ENCODE measurements at regions of chr6 and their contacts with region 1.

Region 1: GRCh38 chr6:44257025-44257752 is at the start of gene SLC35B2:
- DNase-seq: peak; percentile 88
- ATAC-seq: peak; percentile 71
- H3K4me3 ChIP-seq: peak within 1 kb of the TSS; percentile 66 to 84 (median 71)
- H3K27ac ChIP-seq: peak within 1 kb of the TSS; percentile 93
- H3K4me1 ChIP-seq: peaks cover 53% of the 10 kb centered on the region
- H3K27me3 ChIP-seq: no peaks in the 10 kb centered on the region; a peak in 1 of 5 replicates
- CTCF ChIP-seq: peak; percentile 73
- EP300 ChIP-seq: peak in 1 of 2 experiments; percentile 10; a peak in 1 of 4 replicates
- POLR2A ChIP-seq: peak in 1 of 2 experiments; percentile 70; a peak in 2 of 4 replicates
- RAD21 ChIP-seq: no peak
- total RNA-seq, gene SLC35B2: 34.9 and 61.1 TPM in 2 replicates

Region 2: DNA sequence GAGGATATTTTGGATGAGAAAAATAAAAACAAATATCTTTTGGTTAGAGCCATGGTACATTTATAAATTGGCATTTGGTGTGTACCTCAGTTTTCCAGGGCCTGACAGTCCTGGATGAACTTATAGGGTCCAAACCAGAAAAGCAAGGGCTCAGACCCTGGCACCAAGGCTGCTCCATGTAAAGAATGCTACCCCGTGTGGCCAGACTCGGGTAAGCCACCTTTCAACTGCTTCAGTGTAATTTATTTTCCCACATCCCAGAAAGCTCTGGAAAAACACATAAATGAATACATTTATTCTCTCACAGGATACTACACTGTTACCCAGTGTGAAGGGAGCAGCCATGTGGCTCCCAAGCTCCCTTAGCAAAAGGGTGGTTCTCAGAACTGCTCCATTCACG is 143.8 kb before region 1 on chr6:
- CTCF ChIA-PET with region 1: no interaction called
- POLR2A ChIA-PET with region 1: interaction called, 14 read pairs
- in situ Hi-C with region 1: no loop called
- intact Hi-C with region 1: no loop called
- DNase-seq: no peak
- ATAC-seq: peak; percentile 53
- H3K4me3 ChIP-seq: no peak overlapping the region
- H3K27ac ChIP-seq: peak overlapping the region; percentile 19
- H3K4me1 ChIP-seq: peaks cover 86% of the 10 kb centered on the region
- H3K27me3 ChIP-seq: no peaks in the 10 kb centered on the region
- CTCF ChIP-seq: peak; percentile 32; the same call in 1 of the 2 replicates
- EP300 ChIP-seq: no peak
- POLR2A ChIP-seq: no peak
- RAD21 ChIP-seq: peak; percentile 32; the same call in 1 of the 2 replicates

Region 3: DNA sequence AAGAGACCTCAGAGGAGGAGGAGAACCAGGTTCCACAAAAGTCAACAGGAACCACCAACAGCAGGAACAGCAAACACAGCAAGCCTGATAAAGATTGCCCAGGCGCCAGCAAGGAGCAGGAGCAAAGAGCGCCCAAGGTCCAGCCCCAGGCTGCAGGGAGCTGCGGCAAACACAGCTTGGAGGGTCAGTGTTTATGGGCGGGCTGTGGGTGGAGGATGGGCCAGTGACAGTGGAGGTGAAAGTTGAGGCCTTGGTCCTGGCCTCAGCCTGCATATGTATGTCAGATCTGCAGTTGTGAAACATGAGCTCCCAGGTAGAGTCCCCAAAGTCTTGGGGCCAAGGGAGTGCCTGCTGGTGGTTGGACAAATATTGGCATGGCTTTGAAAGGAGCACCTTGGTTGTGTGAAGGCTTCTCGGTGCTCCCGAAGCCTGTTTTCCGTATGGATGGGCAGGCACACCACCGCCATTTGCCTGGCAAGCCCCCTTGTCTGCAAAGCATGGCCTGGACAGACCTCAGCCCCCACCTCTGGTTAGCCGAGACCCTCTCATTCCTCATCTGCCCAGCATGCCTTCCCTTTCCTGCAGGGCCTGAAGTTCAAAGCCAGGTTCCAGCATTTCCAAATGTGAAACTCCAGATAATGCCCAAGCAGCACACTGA is 100.6 kb before region 1 on chr6:
- CTCF ChIA-PET with region 1: interaction called, 4 read pairs
- POLR2A ChIA-PET with region 1: interaction called, 14 read pairs
- in situ Hi-C with region 1: no loop called
- intact Hi-C with region 1: no loop called
- DNase-seq: peak; percentile 97
- ATAC-seq: peak; percentile 92
- H3K4me3 ChIP-seq: peak overlapping the region; percentile 9 to 53 (median 29)
- H3K27ac ChIP-seq: peak overlapping the region; percentile 85
- H3K4me1 ChIP-seq: peaks cover 71% of the 10 kb centered on the region
- H3K27me3 ChIP-seq: no peaks in the 10 kb centered on the region
- CTCF ChIP-seq: no peak; the same call in 1 of the 2 replicates
- EP300 ChIP-seq: peak; percentile 92 to 96
- POLR2A ChIP-seq: no peak; a peak in 2 of 4 replicates
- RAD21 ChIP-seq: peak; percentile 42; the same call in 1 of the 2 replicates

Region 4: GRCh38 chr6:44291841-44292240 is 34.7 kb after region 1 on chr6:
- CTCF ChIA-PET with region 1: no interaction called
- POLR2A ChIA-PET with region 1: no interaction called
- in situ Hi-C with region 1: no loop called
- intact Hi-C with region 1: no loop called
- DNase-seq: no peak
- ATAC-seq: peak; percentile 27
- H3K4me3 ChIP-seq: no peak overlapping the region
- H3K27ac ChIP-seq: no peak overlapping the region
- H3K4me1 ChIP-seq: no peaks in the 10 kb centered on the region
- H3K27me3 ChIP-seq: peaks cover 6 to 63% of the 10 kb centered on the region in 2 experiments
- CTCF ChIP-seq: no peak
- EP300 ChIP-seq: no peak
- POLR2A ChIP-seq: no peak
- RAD21 ChIP-seq: no peak

Region 5: GRCh38 chr6:44681761-44682160 is 424.6 kb after region 1 on chr6:
- CTCF ChIA-PET with region 1: no interaction called
- POLR2A ChIA-PET with region 1: no interaction called
- in situ Hi-C with region 1: no loop called
- intact Hi-C with region 1: no loop called
- DNase-seq: no peak
- ATAC-seq: peak; percentile 40; the same call in 1 of the 3 replicates
- H3K4me3 ChIP-seq: no peak overlapping the region
- H3K27ac ChIP-seq: no peak overlapping the region
- H3K4me1 ChIP-seq: no peaks in the 10 kb centered on the region
- H3K27me3 ChIP-seq: peaks cover 3 to 26% of the 10 kb centered on the region in 2 experiments; a peak in 4 of 5 replicates
- CTCF ChIP-seq: no peak
- EP300 ChIP-seq: no peak
- POLR2A ChIP-seq: no peak
- RAD21 ChIP-seq: no peak